ENCODE measurements at regions of chrX and their contacts with region 1.

Region 1: GRCh38 chrX:33032700-33033099 is 178.6 kb downstream of the DMD start:
- DNase-seq: no peak
- H3K4me3 ChIP-seq: peak overlapping the region in 1 of 4 donors; percentile 5
- H3K27ac ChIP-seq: peak overlapping the region; percentile 67 to 79 (median 72)
- H3K4me1 ChIP-seq: peaks cover 0 to 14% (median 3%) of the 10 kb centered on the region in 4 donors
- H3K27me3 ChIP-seq: no peaks in the 10 kb centered on the region
- CTCF ChIP-seq: no peak
- EP300 ChIP-seq: peak in 2 of 4 donors; percentile 12 to 16
- POLR2A ChIP-seq: no peak

Region 2: DNA sequence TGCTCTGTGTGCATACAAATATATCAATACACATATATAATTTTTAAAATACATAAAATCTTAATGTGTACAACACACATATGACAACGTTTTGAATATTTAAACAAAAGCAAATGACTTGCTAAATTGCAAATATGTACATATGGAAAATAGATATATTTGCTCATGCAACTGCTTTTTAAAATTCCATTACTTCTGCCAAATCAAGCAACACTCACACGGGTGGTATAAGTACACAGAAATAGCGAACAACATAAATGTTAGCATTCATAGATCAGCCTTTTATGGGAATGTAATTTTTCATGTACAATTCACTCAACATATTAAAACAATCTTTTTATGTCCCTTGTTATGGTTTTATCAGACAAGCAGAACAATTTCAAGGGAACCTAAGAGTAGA is 62.4 kb after region 1 on chrX:
- intact Hi-C with region 1: no loop called
- DNase-seq: no peak
- H3K4me3 ChIP-seq: no peak overlapping the region
- H3K27ac ChIP-seq: no peak overlapping the region
- H3K4me1 ChIP-seq: no peaks in the 10 kb centered on the region
- H3K27me3 ChIP-seq: no peaks in the 10 kb centered on the region
- CTCF ChIP-seq: no peak
- EP300 ChIP-seq: no peak
- POLR2A ChIP-seq: no peak

Region 3: GRCh38 chrX:33211356-33212260 is 178.9 kb after region 1 on chrX and contains the start of gene DMD:
- intact Hi-C with region 1: loop called (anchors 5 kb)
- DNase-seq: peak; percentile 87
- H3K4me3 ChIP-seq: peak within 1 kb of the TSS; percentile 28 to 50 (median 43)
- H3K27ac ChIP-seq: peak within 1 kb of the TSS; percentile 70 to 82 (median 78)
- H3K4me1 ChIP-seq: peaks cover 0 to 13% (median 3%) of the 10 kb centered on the region in 4 donors
- H3K27me3 ChIP-seq: no peaks in the 10 kb centered on the region
- CTCF ChIP-seq: no peak
- EP300 ChIP-seq: peak in 2 of 4 donors; percentile 32 to 59
- POLR2A ChIP-seq: peak in 1 of 2 donors; percentile 44
- total RNA-seq, gene DMD: 183 to 260 (median 216) TPM

Measured in sigmoid colon (tissue), 7 donors.